ENCODE measurements at regions of chr14 and their contacts with region 1.

Region 1: GRCh38 chr14:22598099-22598899 is at the start of gene ABHD4:
- DNase-seq: peak; percentile 83
- ATAC-seq: peak; percentile 86
- H3K4me3 Mint-ChIP-seq: peak within 1 kb of the TSS; percentile 99
- H3K27ac Mint-ChIP-seq: peak within 1 kb of the TSS; percentile 99
- H3K4me1 Mint-ChIP-seq: peaks cover 28% of the 10 kb centered on the region
- H3K27me3 Mint-ChIP-seq: no peaks in the 10 kb centered on the region
- CTCF ChIP-seq: no peak
- total RNA-seq, gene ABHD4: 33.5 to 36.1 TPM (median 33.9 TPM) in 3 replicates

Region 2: GRCh38 chr14:22614224-22614799 is 16.0 kb after region 1 on chr14:
- CTCF ChIA-PET with region 1: interaction called, 3 read pairs
- POLR2A ChIA-PET with region 1: interaction called, 10 read pairs
- DNase-seq: no peak
- ATAC-seq: peak; percentile 75
- H3K4me3 Mint-ChIP-seq: no peak overlapping the region
- H3K27ac Mint-ChIP-seq: 0 out of 2 replicates have a peak overlapping the region, but pooled peaks have one; percentile 37
- H3K4me1 Mint-ChIP-seq: peaks cover 11% of the 10 kb centered on the region
- H3K27me3 Mint-ChIP-seq: peaks cover 9% of the 10 kb centered on the region
- CTCF ChIP-seq: no peak

Measured in WTC11 (cell line).